ENCODE measurements at regions of chr2 and their contacts with region 1.

Region 1: DNA sequence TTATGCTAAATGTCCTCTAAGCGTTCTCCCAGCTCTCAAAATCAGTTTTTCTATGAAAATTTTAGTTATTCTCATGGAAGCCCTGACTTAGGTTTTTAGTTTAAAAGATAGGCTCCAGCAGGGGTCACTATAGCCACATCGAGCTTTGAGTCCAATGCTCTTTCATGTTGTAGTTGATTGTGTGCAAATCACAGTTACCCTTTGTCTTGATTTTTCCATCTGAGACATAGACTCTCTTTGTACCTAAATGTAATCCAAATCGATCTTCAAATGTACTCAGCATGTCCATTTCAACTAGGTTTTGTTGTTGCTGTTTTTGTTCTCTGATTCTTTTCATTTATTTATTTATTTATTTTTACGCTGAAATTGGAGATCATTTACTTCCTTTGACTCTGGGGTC is 26.4 kb upstream of the MSTN start:
- DNase-seq: peak in 4 of 10 donors; percentile 6 to 58 (median 37)
- H3K4me3 ChIP-seq: peak overlapping the region in 1 of 59 donors; percentile 27
- H3K27ac ChIP-seq: peak overlapping the region in 54 of 59 donors; percentile 7 to 87 (median 71)
- H3K27me3 ChIP-seq: no peaks in the 10 kb centered on the region
- CTCF ChIP-seq: peak; percentile 68 to 98 (median 85)

Region 2: DNA sequence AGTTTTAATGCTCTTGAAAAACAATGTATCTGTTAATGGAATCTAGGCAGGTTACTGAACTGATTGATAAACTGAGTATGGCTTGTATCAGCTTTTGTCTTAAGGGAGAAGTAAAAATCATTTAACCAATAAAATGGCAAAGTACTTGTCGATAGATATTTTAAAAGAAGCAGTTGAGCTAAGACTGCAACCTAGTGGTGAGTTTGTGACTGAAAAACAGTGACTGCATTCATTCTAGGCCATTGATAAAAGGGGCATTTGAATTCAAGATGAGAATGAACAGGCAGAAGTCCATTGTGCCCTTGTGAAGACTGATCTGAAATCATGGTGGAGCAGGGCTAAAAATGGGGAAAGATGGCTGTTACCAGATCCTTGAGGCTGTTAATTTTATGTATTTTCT is 33.1 kb after region 1 on chr2:
- intact Hi-C with region 1: loop called in 1 of 2 experiments (anchors 5 kb)
- DNase-seq: no peak
- H3K4me3 ChIP-seq: no peak overlapping the region
- H3K27ac ChIP-seq: peak overlapping the region in 48 of 59 donors; percentile 1 to 85 (median 62)
- H3K27me3 ChIP-seq: no peaks in the 10 kb centered on the region
- CTCF ChIP-seq: peak; percentile 30 to 84 (median 63)

Region 3: GRCh38 chr2:190277234-190278112 is 188.6 kb after region 1 on chr2:
- intact Hi-C with region 1: loop called in 1 of 2 experiments (anchors 5 kb)
- DNase-seq: no peak
- H3K4me3 ChIP-seq: no peak overlapping the region
- H3K27ac ChIP-seq: peak overlapping the region in 15 of 59 donors; percentile 0 to 75 (median 26)
- H3K27me3 ChIP-seq: no peaks in the 10 kb centered on the region
- CTCF ChIP-seq: peak in 51 of 56 donors; percentile 25 to 74 (median 53)

Region 4: DNA sequence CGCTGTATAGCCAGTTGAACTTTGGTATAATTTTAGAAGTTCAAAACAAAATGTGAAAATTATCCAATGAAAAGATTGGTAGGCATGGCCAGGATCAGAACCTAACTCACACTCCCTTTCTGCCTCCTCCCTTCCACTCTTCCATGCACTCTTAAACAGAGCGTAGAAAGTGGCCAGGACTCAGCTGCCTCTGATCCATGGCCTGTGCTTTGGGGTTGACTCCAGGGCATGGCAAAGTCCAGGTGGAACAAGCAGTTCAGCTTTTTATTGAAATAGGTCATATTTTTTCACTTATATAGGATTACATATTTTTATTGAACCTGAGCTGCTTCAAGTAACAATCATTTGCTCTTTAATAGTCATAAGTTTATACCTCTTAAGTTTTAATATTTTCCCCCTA is 280.7 kb after region 1 on chr2:
- intact Hi-C with region 1: loop called in 1 of 2 experiments (anchors 5 kb)
- DNase-seq: no peak
- H3K4me3 ChIP-seq: no peak overlapping the region
- H3K27ac ChIP-seq: peak overlapping the region in 34 of 59 donors; percentile 1 to 84 (median 66)
- H3K27me3 ChIP-seq: no peaks in the 10 kb centered on the region
- CTCF ChIP-seq: no peak

Region 5: GRCh38 chr2:190804182-190804795 is 715.4 kb after region 1 on chr2:
- intact Hi-C with region 1: loop called in 1 of 2 experiments (anchors 10 kb)
- DNase-seq: peak in 1 of 10 donors; percentile 5
- H3K4me3 ChIP-seq: peak overlapping the region in 5 of 59 donors; percentile 16 to 35 (median 24)
- H3K27ac ChIP-seq: no peak overlapping the region
- H3K27me3 ChIP-seq: no peaks in the 10 kb centered on the region
- CTCF ChIP-seq: peak; percentile 67 to 87 (median 79)